ENCODE measurements at regions of chr3 and their contacts with region 1.

Region 1: DNA sequence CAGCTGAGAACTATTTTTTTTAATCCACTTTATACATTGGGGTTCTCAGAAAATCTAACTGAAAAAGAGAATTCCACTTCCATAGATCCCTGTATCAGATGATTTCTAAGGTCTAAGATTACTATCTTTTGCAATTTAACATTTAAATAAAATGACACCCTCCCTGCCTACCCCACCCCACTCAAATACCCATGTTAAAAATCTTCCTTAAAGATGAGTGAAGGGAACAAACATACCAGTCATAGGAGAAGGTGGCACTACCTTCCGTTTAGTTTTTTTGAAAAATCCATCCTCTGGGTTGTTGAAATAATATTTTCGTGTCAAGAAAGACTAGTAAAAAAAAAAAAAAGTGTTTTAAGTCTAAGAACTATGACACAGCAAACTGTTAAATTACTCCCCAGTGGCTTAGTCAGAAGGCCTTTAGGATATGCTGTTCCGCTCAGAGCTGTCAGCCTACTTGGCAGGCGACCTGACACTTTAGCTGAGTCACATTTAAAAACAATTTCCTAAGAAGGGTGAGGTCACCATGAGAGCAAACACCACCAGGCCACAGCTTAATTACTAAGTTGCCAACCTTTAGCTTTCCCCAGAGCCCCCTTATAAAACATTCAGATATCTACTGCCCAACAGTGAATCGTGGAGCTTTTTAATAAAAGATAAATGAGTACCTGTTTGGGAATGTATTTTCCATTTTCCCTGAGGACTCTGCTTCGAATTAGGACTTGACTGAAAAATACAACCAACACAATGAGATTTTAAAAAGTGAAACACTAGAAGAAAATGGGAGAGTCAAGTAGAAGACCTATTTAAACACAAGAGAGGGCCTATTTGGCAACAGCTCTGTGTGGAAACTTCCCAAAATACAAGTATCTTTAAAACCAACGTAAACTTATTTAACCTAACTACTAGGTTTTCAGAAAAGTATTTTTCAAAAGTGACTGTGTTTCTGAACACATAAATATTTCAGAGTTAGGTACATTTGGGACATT is 9.6 kb downstream of the EMC3 start:
- DNase-seq: no peak
- H3K4me3 ChIP-seq: no peak overlapping the region
- H3K27ac ChIP-seq: no peak overlapping the region
- H3K4me1 ChIP-seq: no peaks in the 10 kb centered on the region
- H3K27me3 ChIP-seq: no peaks in the 10 kb centered on the region
- CTCF ChIP-seq: no peak
- EP300 ChIP-seq: no peak
- POLR2A ChIP-seq: no peak
- RAD21 ChIP-seq: no peak

Region 2: DNA sequence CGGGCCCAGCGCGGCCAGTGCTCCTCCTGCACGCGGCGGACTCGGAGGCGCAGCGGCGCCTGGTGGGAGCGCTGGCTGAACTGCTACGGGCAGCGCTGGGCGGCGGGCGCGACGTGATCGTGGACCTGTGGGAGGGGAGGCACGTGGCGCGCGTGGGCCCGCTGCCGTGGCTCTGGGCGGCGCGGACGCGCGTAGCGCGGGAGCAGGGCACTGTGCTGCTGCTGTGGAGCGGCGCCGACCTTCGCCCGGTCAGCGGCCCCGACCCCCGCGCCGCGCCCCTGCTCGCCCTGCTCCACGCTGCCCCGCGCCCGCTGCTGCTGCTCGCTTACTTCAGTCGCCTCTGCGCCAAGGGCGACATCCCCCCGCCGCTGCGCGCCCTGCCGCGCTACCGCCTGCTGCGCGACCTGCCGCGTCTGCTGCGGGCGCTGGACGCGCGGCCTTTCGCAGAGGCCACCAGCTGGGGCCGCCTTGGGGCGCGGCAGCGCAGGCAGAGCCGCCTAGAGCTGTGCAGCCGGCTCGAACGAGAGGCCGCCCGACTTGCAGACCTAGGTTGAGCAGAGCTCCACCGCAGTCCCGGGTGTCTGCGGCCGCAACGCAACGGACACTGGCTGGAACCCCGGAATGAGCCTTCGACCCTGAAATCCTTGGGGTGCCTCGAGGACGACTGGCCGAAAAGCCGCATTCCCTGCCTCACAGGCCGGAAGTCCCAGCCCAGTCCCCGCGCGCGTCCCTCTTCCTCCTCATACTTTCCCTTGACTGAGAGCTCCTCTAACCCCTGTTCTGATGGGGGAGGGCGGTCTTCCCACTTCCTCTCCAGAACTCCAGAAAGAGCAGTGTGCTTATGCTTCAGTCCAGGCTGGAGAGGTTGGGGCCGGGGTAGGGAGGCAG is 61.5 kb before region 1 on chr3:
- CTCF ChIA-PET with region 1: no interaction called
- POLR2A ChIA-PET with region 1: no interaction called
- DNase-seq: peak in 1 of 2 experiments; percentile 81
- H3K4me3 ChIP-seq: peak overlapping the region; percentile 46 to 72 (median 48)
- H3K27ac ChIP-seq: no peak overlapping the region
- H3K4me1 ChIP-seq: peaks cover 0 to 20% (median 17%) of the 10 kb centered on the region in 4 experiments; a peak in 6 of 7 replicates
- H3K27me3 ChIP-seq: peaks cover 0 to 18% (median 10%) of the 10 kb centered on the region in 4 experiments; a peak in 5 of 7 replicates
- CTCF ChIP-seq: 0 out of 4 replicates have a peak, but pooled peaks of 1 of the 3 experiments have one; percentile 23
- EP300 ChIP-seq: 0 out of 3 replicates have a peak, but pooled peaks of 1 of the 2 experiments have one; percentile 18
- POLR2A ChIP-seq: peak in 1 of 2 experiments; percentile 59; a peak in 1 of 3 replicates
- RAD21 ChIP-seq: peak in 1 of 2 experiments; percentile 12; a peak in 2 of 4 replicates

Region 3: DNA sequence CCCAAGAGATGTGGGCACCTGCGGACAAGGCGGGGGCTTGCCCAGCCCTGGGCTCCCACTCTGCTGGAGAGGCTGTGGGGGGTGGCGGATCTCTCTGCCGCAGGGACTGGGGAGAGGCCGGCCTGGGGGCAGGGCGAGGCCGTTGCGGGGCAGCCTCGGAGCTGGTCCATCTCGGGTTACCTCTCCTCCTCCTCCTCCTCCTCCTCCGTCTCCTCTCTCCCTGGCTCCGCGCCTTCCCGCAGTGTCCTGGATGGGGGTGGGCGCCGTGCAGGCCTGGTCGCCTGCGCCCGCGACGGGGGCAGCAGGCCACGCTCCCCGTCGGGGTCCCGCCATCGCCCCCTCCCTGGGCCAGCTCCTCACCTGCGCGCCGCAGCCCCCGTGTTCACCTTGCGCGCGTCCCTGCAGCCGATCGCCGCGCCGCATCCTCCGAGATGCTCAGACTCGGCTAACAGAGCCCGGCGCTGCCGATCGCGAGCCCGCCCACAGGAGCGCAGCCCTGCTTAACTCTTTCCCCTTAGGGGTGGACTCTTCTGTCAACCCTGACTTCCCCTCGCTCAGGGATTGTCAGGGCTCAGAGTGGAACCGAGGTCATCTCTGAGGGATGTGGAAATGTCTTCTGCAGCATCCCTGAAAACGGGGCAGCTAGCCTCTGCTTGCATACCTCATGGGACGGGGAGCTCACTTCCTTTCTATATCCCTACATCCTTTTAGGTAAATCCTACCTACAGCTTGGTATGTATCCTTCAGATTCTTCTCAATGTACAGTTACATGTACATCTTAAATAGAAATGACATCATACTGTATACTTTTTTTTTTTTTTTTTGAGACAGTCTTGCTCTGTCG is 24.8 kb before region 1 on chr3 and contains the start of gene PRRT3:
- CTCF ChIA-PET with region 1: interaction called, 21 read pairs
- POLR2A ChIA-PET with region 1: interaction called, 4 read pairs
- DNase-seq: peak in 1 of 2 experiments; percentile 83
- H3K4me3 ChIP-seq: peak within 1 kb of the TSS; percentile 69 to 91 (median 80)
- H3K27ac ChIP-seq: no peak within 1 kb of the TSS
- H3K4me1 ChIP-seq: peaks cover 11 to 24% (median 20%) of the 10 kb centered on the region in 4 experiments
- H3K27me3 ChIP-seq: peaks cover 0 to 11% (median under 1%) of the 10 kb centered on the region in 4 experiments; a peak in 3 of 7 replicates
- CTCF ChIP-seq: no peak
- EP300 ChIP-seq: no peak
- POLR2A ChIP-seq: peak in 1 of 2 experiments; percentile 41; a peak in 1 of 3 replicates
- RAD21 ChIP-seq: no peak
- total RNA-seq, gene PRRT3: 8.4 and 9.2 TPM in 2 replicates

Region 4: DNA sequence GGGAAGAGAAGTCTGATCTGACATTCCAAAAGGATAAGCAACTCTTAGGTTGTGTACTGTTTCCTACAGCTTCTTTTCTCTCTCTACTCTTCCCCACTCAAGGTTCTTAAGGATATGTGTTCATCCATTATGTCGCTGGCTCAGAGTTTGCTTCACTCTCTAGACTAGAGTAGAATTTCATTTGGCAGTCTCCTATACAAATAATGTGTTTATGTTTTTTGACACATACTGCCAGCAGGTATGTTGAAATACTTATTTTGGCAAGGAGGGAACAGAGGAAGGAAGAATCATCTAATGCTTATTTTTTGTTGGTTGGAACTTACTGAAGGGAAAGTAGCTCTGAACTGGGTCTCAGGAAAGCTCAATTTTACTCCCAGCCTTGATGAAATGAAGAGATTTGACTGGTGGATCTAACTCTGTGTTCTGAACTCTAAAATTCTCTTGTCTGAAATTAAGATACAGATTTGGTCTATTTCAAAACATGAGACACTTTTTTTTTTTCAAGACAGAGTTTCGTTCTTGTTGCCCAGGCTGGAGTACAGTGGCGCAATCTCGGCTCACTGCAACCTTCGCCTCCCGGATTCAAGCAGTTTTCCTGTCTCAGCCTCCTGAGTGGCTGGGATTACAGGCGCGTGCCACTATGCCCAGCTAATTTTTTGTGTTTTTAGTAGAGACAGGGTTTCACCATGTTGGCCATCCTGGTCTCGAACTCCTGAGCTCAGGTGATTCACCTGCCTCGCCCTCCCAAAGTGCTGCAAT is 17.2 kb after region 1 on chr3:
- CTCF ChIA-PET with region 1: interaction called, 21 read pairs
- POLR2A ChIA-PET with region 1: no interaction called
- DNase-seq: no peak
- H3K4me3 ChIP-seq: no peak overlapping the region
- H3K27ac ChIP-seq: no peak overlapping the region
- H3K4me1 ChIP-seq: no peaks in the 10 kb centered on the region
- H3K27me3 ChIP-seq: no peaks in the 10 kb centered on the region
- CTCF ChIP-seq: no peak
- EP300 ChIP-seq: no peak
- POLR2A ChIP-seq: no peak
- RAD21 ChIP-seq: no peak

Region 5: GRCh38 chr3:10004506-10004905 is 27.5 kb after region 1 on chr3:
- CTCF ChIA-PET with region 1: no interaction called
- POLR2A ChIA-PET with region 1: no interaction called
- DNase-seq: no peak
- H3K4me3 ChIP-seq: no peak overlapping the region
- H3K27ac ChIP-seq: no peak overlapping the region
- H3K4me1 ChIP-seq: peaks cover 0 to 3% (median 0%) of the 10 kb centered on the region in 4 experiments; a peak in 3 of 7 replicates
- H3K27me3 ChIP-seq: no peaks in the 10 kb centered on the region
- CTCF ChIP-seq: no peak
- EP300 ChIP-seq: no peak
- POLR2A ChIP-seq: no peak
- RAD21 ChIP-seq: no peak

Region 6: DNA sequence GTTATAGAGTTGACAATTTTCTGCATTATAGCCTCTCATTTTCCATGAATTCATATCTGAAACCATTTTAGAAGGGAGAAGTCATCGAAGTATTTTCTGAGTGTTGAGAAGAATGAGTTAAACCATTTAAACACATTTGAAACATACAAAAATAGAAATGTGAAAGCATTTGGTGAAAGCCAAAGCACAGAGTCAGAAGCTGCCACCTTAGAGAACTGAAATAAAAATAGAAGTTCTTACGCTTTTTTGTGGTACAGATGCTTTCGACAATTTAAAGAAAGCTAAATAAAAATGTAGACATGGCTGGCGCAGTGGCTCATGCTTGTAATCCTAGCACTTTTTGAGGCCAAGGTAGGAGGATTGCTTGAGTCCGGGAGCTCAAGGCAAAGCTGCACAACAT is 122.0 kb after region 1 on chr3:
- CTCF ChIA-PET with region 1: no interaction called
- POLR2A ChIA-PET with region 1: no interaction called
- DNase-seq: no peak
- H3K4me3 ChIP-seq: no peak overlapping the region
- H3K27ac ChIP-seq: no peak overlapping the region
- H3K4me1 ChIP-seq: no peaks in the 10 kb centered on the region
- H3K27me3 ChIP-seq: no peaks in the 10 kb centered on the region
- CTCF ChIP-seq: no peak
- EP300 ChIP-seq: no peak
- POLR2A ChIP-seq: no peak
- RAD21 ChIP-seq: no peak